Activated naive CD4-positive, alpha-beta T cell treated with anti-CD3 and anti-CD28 coated beads for 36 hours (primary cell): ENCODE measurements at regions of chr1 and their contacts with region 1.

Region 1: GRCh38 chr1:52056163-52056936 is at the start of gene BTF3L4:
- DNase-seq: peak; percentile 98
- H3K4me3 Mint-ChIP-seq: peak within 1 kb of the TSS; percentile 94
- H3K27ac Mint-ChIP-seq: peak within 1 kb of the TSS; percentile 98
- H3K4me1 Mint-ChIP-seq: peaks cover 40% of the 10 kb centered on the region
- H3K27me3 Mint-ChIP-seq: no peaks in the 10 kb centered on the region
- total RNA-seq, gene BTF3L4: 38.4 to 38.7 TPM

Region 2: GRCh38 chr1:51729156-51729823 is 327.1 kb before region 1 on chr1:
- CTCF ChIA-PET with region 1: no interaction called
- intact Hi-C with region 1: loop called (anchors 2 kb)
- DNase-seq: peak; percentile 97
- H3K4me3 Mint-ChIP-seq: peak overlapping the region; percentile 87
- H3K27ac Mint-ChIP-seq: peak overlapping the region; percentile 87
- H3K4me1 Mint-ChIP-seq: peaks cover 33% of the 10 kb centered on the region
- H3K27me3 Mint-ChIP-seq: no peaks in the 10 kb centered on the region

Region 3: GRCh38 chr1:52141513-52142219 is 85.3 kb after region 1 on chr1 and contains the start of gene ZFYVE9:
- CTCF ChIA-PET with region 1: interaction called, 3 read pairs
- intact Hi-C with region 1: loop called (anchors 1 kb)
- DNase-seq: peak; percentile 66
- H3K4me3 Mint-ChIP-seq: peak within 1 kb of the TSS; percentile 84
- H3K27ac Mint-ChIP-seq: peak within 1 kb of the TSS; percentile 68
- H3K4me1 Mint-ChIP-seq: peaks cover 40% of the 10 kb centered on the region
- H3K27me3 Mint-ChIP-seq: no peaks in the 10 kb centered on the region
- total RNA-seq, gene ZFYVE9: 3.0 to 3.5 TPM

Region 4: DNA sequence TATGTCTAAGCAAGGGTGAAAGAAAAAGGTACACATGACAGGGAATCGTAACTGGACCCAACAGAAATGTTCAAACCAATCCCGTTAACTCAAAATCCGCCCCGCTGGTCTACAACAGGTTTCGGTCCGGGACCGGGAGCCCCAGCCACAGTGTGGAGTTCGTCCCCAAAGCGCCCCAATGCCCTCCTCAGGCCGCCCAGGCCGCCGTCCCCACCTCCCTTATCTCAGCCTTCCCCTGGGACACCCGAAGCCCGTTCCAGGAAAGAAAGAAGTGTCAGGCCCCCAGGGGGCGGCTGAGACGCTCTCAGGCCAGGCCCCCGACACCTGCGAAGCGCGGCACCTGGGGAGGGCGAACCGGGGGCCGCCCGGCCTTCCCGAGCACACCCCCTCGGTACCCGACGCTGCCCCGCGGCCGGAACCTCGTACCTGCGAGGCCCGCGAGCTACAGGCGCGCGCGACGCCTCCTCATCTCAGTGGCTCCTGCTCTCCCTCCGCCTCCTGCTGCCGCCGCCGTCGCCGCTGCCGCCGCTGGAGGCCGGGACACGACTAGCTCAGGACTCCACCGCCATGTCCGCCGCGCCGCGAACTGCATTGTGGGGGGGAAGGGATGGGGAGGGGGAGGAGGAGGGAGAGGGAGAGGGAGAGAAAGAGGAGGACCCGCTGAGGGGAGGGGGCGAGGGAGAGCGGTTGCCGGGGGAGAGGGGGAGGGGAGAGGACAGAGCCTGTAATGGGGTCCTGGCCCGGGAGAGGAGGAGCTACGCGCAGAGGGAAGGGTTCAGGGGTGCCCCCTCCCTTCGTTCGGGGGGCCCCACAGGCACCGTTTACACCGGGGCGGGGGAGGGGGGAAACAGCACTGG is 496.4 kb after region 1 on chr1 and contains the start of gene TUT4:
- CTCF ChIA-PET with region 1: no interaction called
- intact Hi-C with region 1: loop called (anchors 2 kb)
- DNase-seq: peak; percentile 88
- H3K4me3 Mint-ChIP-seq: peak within 1 kb of the TSS; percentile 50
- H3K27ac Mint-ChIP-seq: no peak within 1 kb of the TSS
- H3K4me1 Mint-ChIP-seq: peaks cover 31% of the 10 kb centered on the region
- H3K27me3 Mint-ChIP-seq: no peaks in the 10 kb centered on the region
- total RNA-seq, gene TUT4: 48.1 to 51.2 TPM

Region 5: GRCh38 chr1:52713590-52713989 is 657.2 kb after region 1 on chr1:
- CTCF ChIA-PET with region 1: no interaction called
- intact Hi-C with region 1: no loop called
- DNase-seq: no peak
- H3K4me3 Mint-ChIP-seq: no peak overlapping the region
- H3K27ac Mint-ChIP-seq: no peak overlapping the region
- H3K4me1 Mint-ChIP-seq: no peaks in the 10 kb centered on the region
- H3K27me3 Mint-ChIP-seq: no peaks in the 10 kb centered on the region

Region 6: GRCh38 chr1:52726265-52727113 is 670.1 kb after region 1 on chr1 and contains the start of gene ZYG11B:
- CTCF ChIA-PET with region 1: no interaction called
- intact Hi-C with region 1: loop called (anchors 10 kb)
- DNase-seq: peak; percentile 91
- H3K4me3 Mint-ChIP-seq: peak within 1 kb of the TSS; percentile 85
- H3K27ac Mint-ChIP-seq: peak within 1 kb of the TSS; percentile 55
- H3K4me1 Mint-ChIP-seq: peaks cover 33% of the 10 kb centered on the region
- H3K27me3 Mint-ChIP-seq: no peaks in the 10 kb centered on the region
- total RNA-seq, gene ZYG11B: 10.7 to 11.6 TPM